ENCODE measurements at regions of chr11 and their contacts with region 1.

Region 1: DNA sequence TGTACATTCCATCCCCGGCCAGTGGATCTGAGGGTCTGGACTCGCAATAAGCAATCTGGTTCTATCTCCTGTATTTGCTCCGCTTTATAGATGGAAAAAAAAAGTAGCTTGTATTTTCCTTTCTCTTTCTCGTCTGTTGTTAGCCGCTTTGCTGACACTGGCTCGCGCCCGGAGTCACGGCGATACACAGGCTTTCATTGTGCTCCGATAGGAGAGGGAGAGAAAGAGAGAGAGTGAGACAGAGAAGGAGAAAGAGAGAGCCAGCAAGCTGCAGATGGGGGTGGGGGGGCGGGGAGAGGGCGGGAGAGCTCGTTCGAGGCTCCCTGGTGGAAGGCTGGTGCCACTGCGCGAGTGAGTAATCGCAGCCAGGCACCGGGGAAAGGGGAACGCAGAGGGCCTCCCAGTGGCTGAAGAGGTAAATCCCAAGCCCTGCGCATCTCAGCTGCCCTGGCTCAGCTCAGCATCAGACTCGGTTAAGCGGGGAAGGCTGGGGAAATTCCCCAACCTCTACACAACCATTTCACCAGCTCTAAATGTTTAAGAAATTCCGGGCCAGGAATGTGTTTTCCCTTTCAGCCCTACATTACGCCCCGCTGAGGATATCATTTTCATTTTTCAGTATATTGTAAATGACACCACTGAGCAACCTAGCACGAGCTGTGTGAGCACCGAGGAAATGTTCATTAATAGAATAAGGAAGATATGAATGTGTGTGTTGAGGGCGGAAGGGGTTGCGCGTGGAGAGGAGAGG is at the start of gene MAML2:
- DNase-seq: peak; percentile 67 to 95 (median 89)
- ATAC-seq: peak; percentile 82 to 90 (median 85)
- H3K4me3 ChIP-seq: peak within 1 kb of the TSS; percentile 69 to 97
- H3K4me3 Mint-ChIP-seq: peak within 1 kb of the TSS; percentile 87 to 98 (median 98)
- H3K27ac ChIP-seq: peak within 1 kb of the TSS; percentile 61
- H3K27ac Mint-ChIP-seq: peak within 1 kb of the TSS; percentile 93 to 98
- H3K4me1 ChIP-seq: peaks cover 11 to 36% of the 10 kb centered on the region in 2 experiments
- H3K4me1 Mint-ChIP-seq: peaks cover 23 to 46% (median 36%) of the 10 kb centered on the region in 3 donors
- H3K27me3 ChIP-seq: no peaks in the 10 kb centered on the region
- H3K27me3 Mint-ChIP-seq: no peaks in the 10 kb centered on the region
- total RNA-seq, gene MAML2: 30.4 to 66.7 (median 35.1) TPM

Region 2: GRCh38 chr11:95512682-95513081 is 830.5 kb before region 1 on chr11:
- CTCF ChIA-PET with region 1: no interaction called
- POLR2A ChIA-PET with region 1: no interaction called
- DNase-seq: no peak
- ATAC-seq: no peak
- H3K4me3 ChIP-seq: no peak overlapping the region
- H3K4me3 Mint-ChIP-seq: no peak overlapping the region
- H3K27ac ChIP-seq: no peak overlapping the region
- H3K27ac Mint-ChIP-seq: no peak overlapping the region
- H3K4me1 ChIP-seq: no peaks in the 10 kb centered on the region
- H3K4me1 Mint-ChIP-seq: no peaks in the 10 kb centered on the region
- H3K27me3 ChIP-seq: no peaks in the 10 kb centered on the region
- H3K27me3 Mint-ChIP-seq: peaks cover 0 to 4% of the 10 kb centered on the region in 2 donors

Region 3: DNA sequence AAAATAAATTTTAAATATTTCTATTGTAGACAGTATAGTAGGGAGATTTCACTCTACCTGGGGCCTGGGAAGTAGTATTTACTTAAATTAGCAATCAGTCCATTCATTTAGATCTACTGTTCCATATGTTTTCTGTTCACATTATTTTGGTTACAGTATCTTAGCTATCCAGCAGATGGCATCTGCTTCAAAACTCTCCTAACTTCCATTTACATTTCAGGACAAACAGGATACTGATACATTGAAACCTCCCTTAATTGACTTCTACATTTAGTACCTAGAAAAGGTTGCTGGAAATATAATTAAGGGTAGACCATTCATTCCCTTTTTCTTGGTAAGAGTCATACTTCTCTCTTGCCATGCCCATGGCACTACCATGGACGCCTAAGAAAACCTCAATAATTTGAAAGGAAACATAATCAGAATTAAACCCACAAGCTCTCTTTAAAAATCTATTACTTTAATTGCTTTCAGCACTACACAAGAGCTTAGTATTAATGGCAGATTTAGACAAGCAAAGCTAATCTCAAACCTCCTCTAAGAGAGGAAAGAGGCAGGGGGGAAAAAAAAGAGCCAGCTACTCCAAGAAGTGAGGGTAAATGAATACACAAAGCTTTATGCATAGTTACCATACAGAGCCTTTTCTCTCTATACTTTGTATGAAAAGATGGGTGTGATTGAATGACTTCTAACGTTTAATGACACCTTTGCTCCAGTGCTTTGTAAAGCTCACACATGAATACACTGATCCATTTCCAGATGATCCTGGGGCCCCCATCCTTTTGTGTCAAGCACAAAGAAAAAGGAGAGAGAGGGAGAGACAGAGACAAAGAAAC is 288.0 kb before region 1 on chr11:
- CTCF ChIA-PET with region 1: interaction called, 24 to 145 read pairs
- POLR2A ChIA-PET with region 1: interaction called, 6 to 8 read pairs
- DNase-seq: peak in 1 of 35 experiments; percentile 53
- ATAC-seq: peak; percentile 43 to 64 (median 52)
- H3K4me3 ChIP-seq: no peak overlapping the region
- H3K4me3 Mint-ChIP-seq: no peak overlapping the region
- H3K27ac ChIP-seq: no peak overlapping the region
- H3K27ac Mint-ChIP-seq: peak overlapping the region; percentile 69 to 76
- H3K4me1 ChIP-seq: peaks cover 0 to 5% of the 10 kb centered on the region in 2 experiments
- H3K4me1 Mint-ChIP-seq: peaks cover 58 to 67% (median 62%) of the 10 kb centered on the region in 3 donors
- H3K27me3 ChIP-seq: no peaks in the 10 kb centered on the region
- H3K27me3 Mint-ChIP-seq: no peaks in the 10 kb centered on the region

Region 4: DNA sequence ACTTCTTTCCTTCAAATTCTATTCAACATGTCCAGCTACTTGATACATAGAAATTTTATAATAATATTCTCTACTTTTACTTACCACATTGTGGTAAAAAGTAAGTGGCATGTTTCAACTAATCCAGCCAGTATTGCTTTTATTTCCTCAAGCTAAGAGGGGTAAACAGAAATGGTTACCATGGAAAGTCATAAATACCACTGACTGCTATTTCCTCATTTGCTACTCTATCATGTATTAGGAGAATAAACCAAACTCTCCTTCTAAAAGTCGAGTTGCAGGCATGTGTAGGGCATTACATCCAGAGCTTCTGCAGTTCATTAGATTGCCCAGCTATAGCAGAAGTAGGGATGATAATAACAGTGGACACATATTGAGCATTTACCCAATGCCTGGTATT is 208.5 kb before region 1 on chr11:
- CTCF ChIA-PET with region 1: interaction called, 4 to 7 read pairs
- POLR2A ChIA-PET with region 1: interaction called in 1 of 2 experiments, 11 read pairs
- DNase-seq: peak in 1 of 35 experiments; percentile 51
- ATAC-seq: peak in 2 of 4 experiments; percentile 37 to 62
- H3K4me3 ChIP-seq: no peak overlapping the region
- H3K4me3 Mint-ChIP-seq: no peak overlapping the region
- H3K27ac ChIP-seq: no peak overlapping the region
- H3K27ac Mint-ChIP-seq: peak overlapping the region; percentile 40 to 66
- H3K4me1 ChIP-seq: peaks cover 10 to 29% of the 10 kb centered on the region in 2 experiments
- H3K4me1 Mint-ChIP-seq: peaks cover 69 to 77% (median 73%) of the 10 kb centered on the region in 3 donors
- H3K27me3 ChIP-seq: no peaks in the 10 kb centered on the region
- H3K27me3 Mint-ChIP-seq: no peaks in the 10 kb centered on the region

Region 5: GRCh38 chr11:96254087-96254486 is 89.0 kb before region 1 on chr11:
- CTCF ChIA-PET with region 1: interaction called, 4 to 13 read pairs
- POLR2A ChIA-PET with region 1: interaction called in 1 of 2 experiments, 4 read pairs
- DNase-seq: peak in 21 of 35 experiments; percentile 7 to 59 (median 27)
- ATAC-seq: peak; percentile 26 to 45 (median 38)
- H3K4me3 ChIP-seq: peak overlapping the region; percentile 12 to 29
- H3K4me3 Mint-ChIP-seq: peak overlapping the region; percentile 59 to 73 (median 70)
- H3K27ac ChIP-seq: peak overlapping the region; percentile 40
- H3K27ac Mint-ChIP-seq: peak overlapping the region; percentile 92 to 100
- H3K4me1 ChIP-seq: peaks cover 40 to 70% of the 10 kb centered on the region in 2 experiments
- H3K4me1 Mint-ChIP-seq: peaks cover 92 to 93% (median 92%) of the 10 kb centered on the region in 3 donors
- H3K27me3 ChIP-seq: no peaks in the 10 kb centered on the region
- H3K27me3 Mint-ChIP-seq: no peaks in the 10 kb centered on the region

Region 6: DNA sequence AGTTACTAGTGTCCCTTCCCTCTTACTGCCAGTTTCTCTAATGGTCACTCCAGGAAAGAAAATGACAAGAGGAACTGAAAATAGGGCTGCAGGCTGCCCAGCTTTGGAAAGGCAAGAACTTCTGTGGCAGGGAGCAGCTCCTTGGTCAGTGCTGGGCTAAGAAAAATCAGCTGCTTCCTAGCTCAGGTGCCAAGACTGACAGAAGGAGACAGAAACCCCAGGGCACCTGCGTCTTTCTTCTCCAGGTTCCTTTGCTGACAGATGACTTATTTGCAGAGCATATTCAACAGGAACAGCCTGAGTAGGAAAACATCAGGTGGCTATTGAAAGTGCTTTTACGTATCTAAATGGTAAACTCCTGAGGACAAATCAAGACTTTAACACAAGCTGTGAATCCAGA is 25.6 kb before region 1 on chr11:
- CTCF ChIA-PET with region 1: interaction called, 6 to 18 read pairs
- POLR2A ChIA-PET with region 1: no interaction called
- DNase-seq: no peak
- ATAC-seq: no peak
- H3K4me3 ChIP-seq: no peak overlapping the region
- H3K4me3 Mint-ChIP-seq: peak overlapping the region in 1 of 3 donors; percentile 16
- H3K27ac ChIP-seq: no peak overlapping the region
- H3K27ac Mint-ChIP-seq: peak overlapping the region; percentile 75 to 86
- H3K4me1 ChIP-seq: peaks cover 21 to 33% of the 10 kb centered on the region in 2 experiments
- H3K4me1 Mint-ChIP-seq: peaks cover 97 to 99% (median 98%) of the 10 kb centered on the region in 3 donors
- H3K27me3 ChIP-seq: no peaks in the 10 kb centered on the region
- H3K27me3 Mint-ChIP-seq: no peaks in the 10 kb centered on the region

Region 7: DNA sequence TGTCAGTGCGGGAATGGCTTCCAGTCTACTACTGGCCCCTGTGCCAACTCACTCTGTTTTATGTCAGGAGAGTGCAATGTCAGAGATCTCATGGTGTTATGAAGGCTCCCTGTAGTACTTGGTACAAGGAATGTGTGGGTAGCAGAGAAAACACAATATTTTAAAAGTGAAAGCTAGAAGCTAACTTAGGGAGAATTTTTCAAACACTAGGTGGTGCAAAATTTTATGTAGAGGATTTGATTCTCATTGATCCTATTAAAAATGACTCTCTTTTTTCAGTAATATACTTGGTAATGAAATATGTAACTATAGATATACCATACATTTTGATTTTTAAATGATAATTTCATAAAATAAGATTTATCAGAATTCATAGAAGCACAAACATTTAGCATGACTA is 181.3 kb after region 1 on chr11:
- CTCF ChIA-PET with region 1: no interaction called
- POLR2A ChIA-PET with region 1: no interaction called
- DNase-seq: no peak
- ATAC-seq: no peak
- H3K4me3 ChIP-seq: no peak overlapping the region
- H3K4me3 Mint-ChIP-seq: no peak overlapping the region
- H3K27ac ChIP-seq: no peak overlapping the region
- H3K27ac Mint-ChIP-seq: no peak overlapping the region
- H3K4me1 ChIP-seq: no peaks in the 10 kb centered on the region
- H3K4me1 Mint-ChIP-seq: no peaks in the 10 kb centered on the region
- H3K27me3 ChIP-seq: peaks cover 0 to 12% of the 10 kb centered on the region in 2 experiments
- H3K27me3 Mint-ChIP-seq: peaks cover 21 to 26% of the 10 kb centered on the region in 2 donors